WTC11 (cell line): ENCODE measurements at regions of chr7 and their contacts with region 1.

Region 1: GRCh38 chr7:74026903-74027551 is 946 bp upstream of the ELN start:
- DNase-seq: peak; percentile 90
- ATAC-seq: peak; percentile 73
- H3K4me3 Mint-ChIP-seq: no peak overlapping the region
- H3K27ac Mint-ChIP-seq: no peak overlapping the region
- H3K4me1 Mint-ChIP-seq: peaks cover 36% of the 10 kb centered on the region
- H3K27me3 Mint-ChIP-seq: peaks cover 10% of the 10 kb centered on the region
- CTCF ChIP-seq: peak; percentile 90

Region 2: DNA sequence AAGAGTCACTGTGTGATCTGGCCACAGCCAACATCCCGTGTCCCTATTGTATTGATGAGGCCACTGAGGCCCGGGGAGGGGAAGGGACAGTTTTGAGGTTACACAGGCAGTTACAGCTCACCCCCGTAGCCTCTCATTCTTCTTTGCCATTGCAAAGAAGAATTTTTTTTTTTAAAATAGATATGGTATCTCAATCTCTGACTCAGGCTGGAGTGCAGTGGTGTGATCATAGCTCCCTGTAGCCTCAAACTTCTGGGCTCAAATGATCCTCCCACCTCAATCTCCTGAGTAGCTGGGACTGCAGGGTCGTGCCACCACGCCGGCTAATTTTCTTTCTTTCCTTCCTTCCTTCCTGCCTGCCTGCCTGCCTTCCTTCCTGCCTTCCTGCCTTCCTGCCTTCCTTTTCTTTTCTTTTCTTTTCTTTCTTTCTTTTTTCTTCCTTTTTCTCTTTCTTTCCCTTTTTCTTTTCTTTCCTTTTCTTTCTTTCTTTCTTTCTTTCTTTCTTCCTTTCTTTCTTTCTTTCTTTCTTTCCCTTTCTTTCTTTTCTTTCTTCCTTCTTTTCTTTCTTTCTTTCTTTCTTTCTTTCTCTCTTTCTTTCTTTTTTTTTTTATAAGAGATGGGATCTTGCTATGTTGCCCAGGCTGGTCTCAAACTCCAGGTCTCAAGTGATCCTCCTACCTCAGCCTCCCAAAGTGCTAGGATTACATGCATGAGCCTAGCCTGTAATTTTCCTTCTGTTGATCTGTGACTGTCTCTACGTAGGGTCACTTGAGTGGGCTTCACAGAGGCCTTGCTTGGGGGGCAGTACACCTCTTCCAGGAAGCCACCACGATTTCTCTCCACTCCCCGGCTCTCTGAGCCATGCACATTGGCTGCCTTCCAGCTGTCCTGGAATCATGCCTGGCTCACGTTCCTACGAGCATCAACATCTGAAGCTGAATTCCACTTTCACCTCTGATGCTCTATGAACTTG is 134.7 kb before region 1 on chr7:
- CTCF ChIA-PET with region 1: interaction called, 10 read pairs
- POLR2A ChIA-PET with region 1: no interaction called
- DNase-seq: no peak
- ATAC-seq: no peak
- H3K4me3 Mint-ChIP-seq: no peak overlapping the region
- H3K27ac Mint-ChIP-seq: no peak overlapping the region
- H3K4me1 Mint-ChIP-seq: peaks cover 4% of the 10 kb centered on the region; the same call in 1 of the 2 replicates
- H3K27me3 Mint-ChIP-seq: no peaks in the 10 kb centered on the region; the same call in 1 of the 2 replicates
- CTCF ChIP-seq: no peak

Region 3: GRCh38 chr7:73971704-73972341 is 55.2 kb before region 1 on chr7:
- CTCF ChIA-PET with region 1: interaction called, 21 read pairs
- POLR2A ChIA-PET with region 1: no interaction called
- DNase-seq: peak; percentile 76
- ATAC-seq: peak; percentile 98
- H3K4me3 Mint-ChIP-seq: no peak overlapping the region
- H3K27ac Mint-ChIP-seq: no peak overlapping the region
- H3K4me1 Mint-ChIP-seq: peaks cover 6% of the 10 kb centered on the region
- H3K27me3 Mint-ChIP-seq: no peaks in the 10 kb centered on the region; the same call in 1 of the 2 replicates
- CTCF ChIP-seq: peak; percentile 38; the same call in 1 of the 2 replicates

Region 4: DNA sequence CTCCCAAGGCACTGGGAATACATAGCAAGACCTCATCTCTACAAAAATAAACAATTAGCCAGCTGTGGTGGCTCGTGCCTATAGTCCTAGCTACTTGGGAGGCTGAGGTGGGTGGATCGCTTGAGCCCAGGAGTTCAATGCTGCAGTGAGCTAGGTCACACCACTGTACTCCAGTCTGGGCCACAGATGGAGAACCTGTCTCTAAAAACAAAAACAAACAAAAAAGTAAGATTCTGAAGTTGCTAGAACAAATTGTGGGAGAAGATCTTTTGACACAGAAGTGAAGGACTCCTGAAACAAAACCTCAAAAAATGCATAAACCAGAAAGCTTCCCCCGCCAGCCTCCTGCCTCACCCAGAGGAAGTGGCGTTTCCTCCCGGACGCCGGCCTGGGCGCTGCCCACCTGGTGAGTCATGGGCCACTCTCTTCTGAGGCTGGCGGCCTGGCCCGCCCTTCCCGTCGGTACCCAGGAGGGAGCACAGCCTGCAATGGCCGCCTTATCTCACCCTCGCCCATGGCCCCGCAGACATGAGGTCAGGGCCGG is 24.5 kb before region 1 on chr7:
- CTCF ChIA-PET with region 1: interaction called, 23 read pairs
- POLR2A ChIA-PET with region 1: no interaction called
- DNase-seq: no peak
- ATAC-seq: no peak
- H3K4me3 Mint-ChIP-seq: no peak overlapping the region
- H3K27ac Mint-ChIP-seq: 0 out of 2 replicates have a peak overlapping the region, but pooled peaks have one; percentile 5
- H3K4me1 Mint-ChIP-seq: peaks cover 2% of the 10 kb centered on the region; the same call in 1 of the 2 replicates
- H3K27me3 Mint-ChIP-seq: no peaks in the 10 kb centered on the region
- CTCF ChIP-seq: no peak

Region 5: DNA sequence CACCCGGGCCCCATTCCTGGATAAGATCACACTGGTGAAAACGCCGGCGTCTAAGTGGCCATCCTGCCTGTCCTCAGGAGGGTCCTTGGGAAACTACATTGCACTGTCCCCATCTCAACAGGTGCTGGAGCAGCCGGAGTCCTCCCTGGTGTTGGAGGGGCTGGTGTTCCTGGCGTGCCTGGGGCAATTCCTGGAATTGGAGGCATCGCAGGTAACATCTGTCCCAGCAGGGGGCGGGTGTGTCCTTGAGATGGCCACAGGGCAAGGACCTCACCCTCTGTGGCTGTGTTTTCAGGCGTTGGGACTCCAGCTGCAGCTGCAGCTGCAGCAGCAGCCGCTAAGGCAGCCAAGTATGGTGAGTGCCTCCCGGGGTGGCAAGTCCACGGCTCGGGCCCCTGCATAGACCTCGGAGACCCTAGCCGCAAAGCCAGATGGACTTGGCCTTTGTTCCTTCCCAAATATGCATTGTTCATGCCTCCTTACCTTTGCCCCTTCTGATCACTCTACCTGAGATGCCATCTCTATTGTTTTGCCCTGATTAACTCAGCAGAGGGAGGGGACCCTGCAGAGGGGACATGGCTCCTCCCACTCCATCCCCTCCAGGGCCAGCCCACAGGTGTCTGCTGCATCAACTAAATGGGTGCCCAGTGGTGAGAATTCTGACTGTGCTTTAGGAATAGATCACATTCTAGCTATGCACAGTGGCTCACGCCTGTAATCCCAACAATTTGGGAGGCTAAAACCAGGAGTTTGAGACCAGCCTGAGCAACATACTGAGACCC is 24.8 kb after region 1 on chr7:
- CTCF ChIA-PET with region 1: interaction called, 122 read pairs
- POLR2A ChIA-PET with region 1: no interaction called
- DNase-seq: peak; percentile 80
- ATAC-seq: peak; percentile 87
- H3K4me3 Mint-ChIP-seq: no peak overlapping the region
- H3K27ac Mint-ChIP-seq: peak overlapping the region; percentile 15; the same call in 1 of the 2 replicates
- H3K4me1 Mint-ChIP-seq: peaks cover 13% of the 10 kb centered on the region
- H3K27me3 Mint-ChIP-seq: no peaks in the 10 kb centered on the region
- CTCF ChIP-seq: 0 out of 2 replicates have a peak, but pooled peaks have one; percentile 18

Region 6: DNA sequence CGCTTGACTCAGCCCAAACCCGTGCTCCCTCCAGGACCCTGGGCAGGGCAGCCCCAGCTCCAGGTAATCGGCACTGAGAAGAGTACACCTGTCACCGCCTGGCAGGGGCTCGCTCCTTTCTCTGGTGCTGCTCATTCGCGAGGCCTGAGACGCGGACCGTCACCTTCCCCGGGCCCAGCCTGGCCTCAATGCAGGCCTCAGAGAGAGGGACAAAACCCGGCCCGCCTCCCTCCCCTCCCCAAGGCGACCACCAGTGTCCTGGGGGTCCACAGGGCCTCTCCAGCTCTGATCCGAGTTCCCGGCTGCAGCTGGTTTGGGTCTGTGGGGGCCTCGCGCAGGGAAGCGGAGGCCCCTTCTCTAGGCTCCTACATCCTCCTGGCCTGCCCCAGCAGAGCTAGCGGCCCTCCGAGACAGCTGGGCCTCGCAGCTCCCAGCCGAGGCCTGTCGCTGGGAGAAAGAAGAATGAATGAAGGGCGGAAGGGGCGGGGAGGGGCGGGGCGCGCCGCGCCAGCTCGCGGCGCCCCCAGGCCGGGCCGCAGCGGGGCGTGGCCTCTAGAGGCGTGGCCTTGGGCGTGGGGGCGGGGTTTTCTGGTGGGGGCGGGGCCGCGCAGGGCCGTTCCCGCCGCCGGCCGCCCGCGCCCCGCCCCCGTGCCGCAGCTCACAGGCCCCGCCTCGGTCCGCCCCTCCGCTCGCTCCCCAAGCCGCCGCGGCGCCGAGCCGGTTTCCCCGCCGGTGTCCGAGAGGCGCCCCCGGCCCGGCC is 56.3 kb after region 1 on chr7 and contains the start of gene LIMK1:
- CTCF ChIA-PET with region 1: interaction called, 13 read pairs
- POLR2A ChIA-PET with region 1: no interaction called
- DNase-seq: peak; percentile 75
- ATAC-seq: peak; percentile 70
- H3K4me3 Mint-ChIP-seq: peak within 1 kb of the TSS; percentile 76
- H3K27ac Mint-ChIP-seq: no peak within 1 kb of the TSS; the same call in 1 of the 2 replicates
- H3K4me1 Mint-ChIP-seq: peaks cover 26% of the 10 kb centered on the region
- H3K27me3 Mint-ChIP-seq: no peaks in the 10 kb centered on the region; the same call in 1 of the 2 replicates
- CTCF ChIP-seq: no peak
- total RNA-seq, gene LIMK1: 85.4 to 92.1 TPM (median 90.6 TPM) in 3 replicates

Region 7: DNA sequence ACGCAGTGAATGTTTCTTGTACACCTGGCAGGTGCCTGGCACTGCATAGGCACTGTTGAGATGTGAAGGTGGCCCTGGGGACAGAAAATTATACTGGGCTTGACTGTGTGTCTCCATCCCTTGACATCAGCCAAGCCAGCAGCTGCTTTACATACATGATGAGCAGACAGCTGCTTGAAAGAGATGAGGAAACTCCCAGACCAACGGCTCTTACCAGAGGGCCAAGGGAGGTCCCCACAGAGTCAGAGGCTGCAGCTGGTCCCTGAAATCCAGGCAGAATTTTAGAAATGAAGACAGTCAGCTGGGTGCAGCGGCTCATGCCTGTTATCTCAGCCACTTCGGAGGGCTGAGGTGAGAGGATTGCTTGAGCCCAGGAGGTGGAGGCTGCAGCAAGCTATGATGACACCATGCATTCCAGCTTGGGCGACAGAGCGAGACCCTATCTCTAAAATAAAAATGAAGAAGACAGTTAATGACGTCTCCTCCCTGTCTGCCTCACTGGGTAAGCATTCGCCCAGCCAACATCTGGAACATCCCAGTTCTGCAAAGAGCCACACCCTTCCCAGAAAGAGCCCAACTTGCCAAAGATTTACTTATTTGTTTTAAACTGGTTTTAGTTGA is 74.1 kb after region 1 on chr7:
- CTCF ChIA-PET with region 1: no interaction called
- POLR2A ChIA-PET with region 1: no interaction called
- DNase-seq: no peak
- ATAC-seq: no peak
- H3K4me3 Mint-ChIP-seq: no peak overlapping the region
- H3K27ac Mint-ChIP-seq: no peak overlapping the region
- H3K4me1 Mint-ChIP-seq: no peaks in the 10 kb centered on the region
- H3K27me3 Mint-ChIP-seq: no peaks in the 10 kb centered on the region
- CTCF ChIP-seq: no peak

Region 8: GRCh38 chr7:74121401-74122249 is 94.6 kb after region 1 on chr7:
- CTCF ChIA-PET with region 1: no interaction called
- POLR2A ChIA-PET with region 1: no interaction called
- DNase-seq: no peak
- ATAC-seq: no peak
- H3K4me3 Mint-ChIP-seq: no peak overlapping the region
- H3K27ac Mint-ChIP-seq: peak overlapping the region; percentile 76
- H3K4me1 Mint-ChIP-seq: no peaks in the 10 kb centered on the region
- H3K27me3 Mint-ChIP-seq: peaks cover 3% of the 10 kb centered on the region; the same call in 1 of the 2 replicates
- CTCF ChIP-seq: no peak

Region 9: GRCh38 chr7:74598558-74598957 is 571.5 kb after region 1 on chr7:
- CTCF ChIA-PET with region 1: no interaction called
- POLR2A ChIA-PET with region 1: no interaction called
- DNase-seq: no peak
- ATAC-seq: no peak
- H3K4me3 Mint-ChIP-seq: no peak overlapping the region
- H3K27ac Mint-ChIP-seq: no peak overlapping the region
- H3K4me1 Mint-ChIP-seq: no peaks in the 10 kb centered on the region
- H3K27me3 Mint-ChIP-seq: no peaks in the 10 kb centered on the region
- CTCF ChIP-seq: no peak